Ascending aorta (tissue), 2 donors: ENCODE measurements at regions of chr16 and their contacts with region 1.

Region 1: GRCh38 chr16:20741554-20742285 is at the start of gene THUMPD1:
- DNase-seq: peak; percentile 90 to 98
- H3K4me3 ChIP-seq: peak within 1 kb of the TSS; percentile 85 to 88
- H3K27ac ChIP-seq: peak within 1 kb of the TSS; percentile 94 to 97
- H3K4me1 ChIP-seq: peaks cover 3 to 19% of the 10 kb centered on the region in 2 donors
- H3K27me3 ChIP-seq: no peaks in the 10 kb centered on the region
- CTCF ChIP-seq: peak in 2 of 3 experiments; percentile 15 to 34
- total RNA-seq, gene THUMPD1: 12.7 TPM

Region 2: DNA sequence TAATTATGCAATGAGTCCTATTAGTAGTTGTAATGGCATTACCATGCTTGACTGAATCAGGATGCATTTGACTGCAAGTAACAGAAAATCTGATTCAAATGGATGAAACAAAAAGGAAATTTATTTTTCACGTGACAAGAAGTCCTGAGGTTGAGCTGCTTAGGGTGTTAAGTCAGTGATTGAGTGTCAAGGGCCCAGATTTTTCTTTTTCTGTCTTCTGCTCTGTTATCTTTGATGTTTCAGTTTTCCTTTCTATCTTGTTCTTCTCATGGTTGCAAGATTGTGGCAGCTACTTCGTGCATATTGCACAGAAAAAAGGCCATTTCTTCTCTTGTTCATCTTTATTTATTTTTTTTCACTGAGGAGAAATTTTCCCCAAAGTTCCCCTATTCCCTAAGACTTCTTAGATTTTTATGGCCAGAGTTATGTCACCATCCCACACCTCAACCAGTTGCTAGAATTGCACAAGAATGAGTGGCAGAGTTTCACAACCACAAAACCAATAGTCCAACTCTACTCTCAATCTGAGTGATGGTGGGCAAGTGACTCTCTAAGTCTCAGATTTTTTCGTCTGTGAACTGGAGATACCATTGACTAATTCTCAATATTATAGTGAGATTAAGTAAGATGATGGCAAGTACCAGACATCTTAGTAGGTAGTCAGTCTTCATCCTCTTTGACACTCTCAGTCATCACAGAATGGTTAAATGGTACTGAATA is 652.3 kb before region 1 on chr16:
- intact Hi-C with region 1: no loop called
- DNase-seq: no peak
- H3K4me3 ChIP-seq: no peak overlapping the region
- H3K27ac ChIP-seq: no peak overlapping the region
- H3K4me1 ChIP-seq: no peaks in the 10 kb centered on the region
- H3K27me3 ChIP-seq: no peaks in the 10 kb centered on the region
- CTCF ChIP-seq: no peak

Region 3: GRCh38 chr16:20359997-20360396 is 381.7 kb before region 1 on chr16:
- intact Hi-C with region 1: no loop called
- DNase-seq: no peak
- H3K4me3 ChIP-seq: no peak overlapping the region
- H3K27ac ChIP-seq: no peak overlapping the region
- H3K4me1 ChIP-seq: no peaks in the 10 kb centered on the region
- H3K27me3 ChIP-seq: no peaks in the 10 kb centered on the region
- CTCF ChIP-seq: peak in 1 of 3 experiments; percentile 10

Region 4: DNA sequence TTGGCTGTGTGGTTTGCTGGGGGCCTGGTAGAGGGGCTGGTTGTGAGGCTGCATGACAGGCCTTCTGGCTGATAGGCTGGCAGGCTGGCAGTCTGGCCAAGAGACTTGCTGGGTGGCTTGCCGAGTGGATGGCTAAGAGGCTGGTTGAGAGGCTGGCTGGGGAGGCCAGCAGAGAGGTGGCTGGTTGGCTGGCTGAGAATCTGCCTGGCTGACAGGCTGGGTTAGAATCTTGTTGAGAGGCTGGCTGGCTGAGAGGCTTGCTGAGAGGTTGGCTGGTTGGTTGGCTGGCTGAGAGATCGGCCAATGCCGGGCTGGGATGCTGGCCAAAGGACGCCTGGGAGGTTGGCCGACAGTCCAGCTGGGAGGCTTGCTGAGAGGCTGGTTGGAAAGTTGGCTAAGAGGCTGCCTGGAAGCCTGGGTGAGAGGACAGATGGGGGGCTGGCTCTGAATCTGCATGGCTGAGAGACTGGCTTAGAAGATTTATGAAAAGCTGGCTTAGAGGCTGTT is 129.7 kb before region 1 on chr16:
- intact Hi-C with region 1: loop called (anchors 2 kb)
- DNase-seq: peak in 1 of 2 donors; percentile 87
- H3K4me3 ChIP-seq: peak overlapping the region; percentile 37 to 49
- H3K27ac ChIP-seq: peak overlapping the region; percentile 98 to 99
- H3K4me1 ChIP-seq: peaks cover 6 to 19% of the 10 kb centered on the region in 2 donors
- H3K27me3 ChIP-seq: no peaks in the 10 kb centered on the region
- CTCF ChIP-seq: no peak

Region 5: DNA sequence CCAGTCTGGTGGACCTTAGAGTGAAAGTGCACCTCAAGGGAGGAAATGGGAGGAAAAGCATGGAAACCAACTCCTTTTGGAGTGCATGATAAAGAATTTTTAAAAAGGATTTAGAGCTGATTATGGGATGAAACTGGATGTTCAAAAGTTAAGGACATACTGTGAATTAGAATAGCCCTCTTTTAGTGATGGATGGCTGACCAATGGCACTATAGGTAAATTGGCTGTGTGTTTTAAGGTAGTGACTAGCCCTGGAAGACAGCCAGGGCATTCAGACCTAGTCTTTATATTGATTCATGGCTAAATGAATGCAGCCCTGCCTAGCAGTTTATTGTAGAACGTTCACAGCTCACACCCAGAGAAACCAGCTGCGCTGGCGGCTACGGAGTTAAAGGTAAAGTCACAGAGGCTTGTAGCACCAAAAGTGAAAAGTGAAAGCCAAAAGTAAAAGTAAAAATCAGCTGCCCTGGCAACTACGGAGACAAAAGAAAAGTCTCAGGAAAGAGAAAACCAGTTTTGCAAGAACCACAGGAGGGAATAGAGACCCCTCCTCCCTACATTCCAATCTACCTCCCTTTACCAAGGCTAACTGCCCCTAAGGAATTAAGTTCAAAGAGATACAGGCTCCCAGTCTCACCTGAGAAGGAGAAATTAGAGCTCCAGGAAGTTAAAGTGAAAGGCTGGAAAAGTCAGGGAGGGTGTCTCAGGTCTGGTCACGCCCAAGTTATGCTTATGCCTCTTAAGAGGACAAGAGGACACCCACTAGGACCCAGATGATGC is 66.0 kb before region 1 on chr16:
- intact Hi-C with region 1: loop called (anchors 5 kb)
- DNase-seq: no peak
- H3K4me3 ChIP-seq: peak overlapping the region; percentile 36 to 61
- H3K27ac ChIP-seq: peak overlapping the region; percentile 79 to 84
- H3K4me1 ChIP-seq: peaks cover 6 to 27% of the 10 kb centered on the region in 2 donors
- H3K27me3 ChIP-seq: no peaks in the 10 kb centered on the region
- CTCF ChIP-seq: no peak

Region 6: DNA sequence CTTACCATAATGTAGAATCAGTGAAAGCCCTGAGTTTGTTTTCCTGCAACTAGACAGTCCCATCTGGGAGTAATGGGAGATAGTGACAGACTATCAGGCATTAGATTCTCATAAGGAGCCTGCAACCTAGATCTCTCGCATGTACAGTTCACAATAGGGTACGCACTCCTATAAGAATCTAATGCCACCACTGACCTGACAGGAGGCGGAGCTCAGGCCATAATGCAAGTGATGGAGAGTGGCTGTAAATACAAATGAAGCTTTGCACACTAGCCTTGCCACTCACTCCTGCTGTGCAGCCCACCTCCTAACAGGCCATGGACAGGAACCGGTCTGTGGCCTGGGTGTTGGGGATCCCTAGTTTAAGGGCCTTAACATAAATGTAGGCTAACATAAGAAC is 21.5 kb before region 1 on chr16:
- intact Hi-C with region 1: no loop called
- DNase-seq: no peak
- H3K4me3 ChIP-seq: no peak overlapping the region
- H3K27ac ChIP-seq: no peak overlapping the region
- H3K4me1 ChIP-seq: no peaks in the 10 kb centered on the region
- H3K27me3 ChIP-seq: no peaks in the 10 kb centered on the region
- CTCF ChIP-seq: no peak

Region 7: GRCh38 chr16:20806168-20807050 is 64.7 kb after region 1 on chr16 and contains the starts of genes ERI2 and REXO5:
- intact Hi-C with region 1: loop called (anchors 5 kb)
- DNase-seq: peak; percentile 80 to 96
- H3K4me3 ChIP-seq: peak within 1 kb of the TSS; percentile 76 to 92
- H3K27ac ChIP-seq: peak within 1 kb of the TSS; percentile 87 to 92
- H3K4me1 ChIP-seq: peaks cover 0 to 5% of the 10 kb centered on the region in 2 donors
- H3K27me3 ChIP-seq: no peaks in the 10 kb centered on the region
- CTCF ChIP-seq: peak in 1 of 3 experiments; percentile 59
- total RNA-seq, gene ERI2: not detected
- total RNA-seq, gene REXO5: 2.1 TPM

Region 8: DNA sequence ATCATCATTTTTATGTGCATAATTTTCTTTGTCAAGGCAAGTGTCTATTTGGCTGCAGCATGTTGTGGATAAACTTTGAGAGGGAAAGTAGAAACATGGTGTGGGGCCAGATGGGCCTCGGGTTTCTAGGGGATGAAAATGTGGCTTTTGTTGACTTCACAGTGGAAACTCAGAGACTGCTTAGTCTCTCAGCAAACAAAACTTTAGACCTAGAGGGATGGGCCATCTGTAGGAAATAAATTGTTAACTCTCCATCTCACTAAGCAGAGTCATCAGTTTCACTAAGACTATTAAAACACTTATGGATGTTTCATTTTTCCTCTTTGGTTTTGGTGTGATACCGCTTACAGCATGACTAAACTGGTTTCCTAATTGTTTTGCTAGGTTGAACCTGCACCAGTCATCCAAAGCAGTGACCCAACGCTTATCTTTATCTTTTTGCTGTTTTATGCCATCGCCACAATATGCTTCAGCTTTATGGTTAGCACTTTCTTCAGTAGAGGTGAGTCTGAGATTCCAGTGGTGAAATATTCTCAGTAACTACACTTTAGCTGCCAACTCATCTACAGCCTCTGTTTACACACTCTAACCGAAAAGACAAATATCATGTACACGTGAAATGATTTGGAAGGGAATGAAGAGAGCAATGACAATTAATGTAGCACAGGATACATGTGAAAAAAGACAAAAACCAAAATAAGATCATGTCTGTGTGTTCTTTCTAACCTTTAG is 597.0 kb after region 1 on chr16:
- intact Hi-C with region 1: no loop called
- DNase-seq: no peak
- H3K4me3 ChIP-seq: no peak overlapping the region
- H3K27ac ChIP-seq: no peak overlapping the region
- H3K4me1 ChIP-seq: no peaks in the 10 kb centered on the region
- H3K27me3 ChIP-seq: no peaks in the 10 kb centered on the region
- CTCF ChIP-seq: no peak

Region 9: GRCh38 chr16:22694887-22695382 is 1953.2 kb after region 1 on chr16:
- intact Hi-C with region 1: loop called (anchors 2 kb)
- DNase-seq: peak in 1 of 2 donors; percentile 91
- H3K4me3 ChIP-seq: peak overlapping the region in 1 of 2 donors; percentile 32
- H3K27ac ChIP-seq: peak overlapping the region; percentile 81 to 91
- H3K4me1 ChIP-seq: peaks cover 0 to 23% of the 10 kb centered on the region in 2 donors
- H3K27me3 ChIP-seq: no peaks in the 10 kb centered on the region
- CTCF ChIP-seq: no peak